ENCODE measurements at regions of chr4 and their contacts with region 1.

Region 1: DNA sequence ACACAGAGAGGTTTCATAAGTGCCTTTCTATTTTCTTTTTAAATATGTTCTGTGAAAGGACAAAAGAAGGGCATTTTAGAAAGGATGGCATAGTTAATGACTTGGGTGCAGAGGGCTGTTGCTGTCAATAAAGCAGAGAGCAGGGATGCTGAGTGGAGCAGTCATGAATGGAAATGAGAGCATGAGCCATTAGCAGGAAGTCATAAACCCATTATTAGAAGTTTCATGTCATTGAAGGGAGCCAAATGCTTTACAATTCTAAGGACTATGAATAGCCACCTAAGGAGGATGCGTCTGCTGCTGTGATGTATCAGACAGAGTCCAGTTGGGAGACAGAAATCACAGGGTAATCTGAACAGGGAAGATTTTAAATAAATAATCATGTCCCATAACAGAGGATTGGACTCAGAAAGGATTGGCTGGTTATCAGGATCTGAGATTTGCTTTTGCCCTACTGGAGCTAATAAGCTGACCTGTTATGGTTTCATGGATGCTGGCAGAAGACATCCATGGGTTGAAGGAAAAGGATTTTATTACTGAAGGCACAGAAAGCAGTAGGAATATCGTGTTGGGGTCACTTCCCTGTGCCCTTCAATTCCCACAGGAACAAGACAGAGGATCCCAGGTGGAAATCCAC is 47.5 kb upstream of the WDR19 start:
- DNase-seq: no peak
- ATAC-seq: no peak
- H3K4me3 Mint-ChIP-seq: no peak overlapping the region
- H3K27ac Mint-ChIP-seq: no peak overlapping the region
- H3K4me1 Mint-ChIP-seq: peaks cover 10% of the 10 kb centered on the region
- H3K27me3 Mint-ChIP-seq: no peaks in the 10 kb centered on the region

Region 2: DNA sequence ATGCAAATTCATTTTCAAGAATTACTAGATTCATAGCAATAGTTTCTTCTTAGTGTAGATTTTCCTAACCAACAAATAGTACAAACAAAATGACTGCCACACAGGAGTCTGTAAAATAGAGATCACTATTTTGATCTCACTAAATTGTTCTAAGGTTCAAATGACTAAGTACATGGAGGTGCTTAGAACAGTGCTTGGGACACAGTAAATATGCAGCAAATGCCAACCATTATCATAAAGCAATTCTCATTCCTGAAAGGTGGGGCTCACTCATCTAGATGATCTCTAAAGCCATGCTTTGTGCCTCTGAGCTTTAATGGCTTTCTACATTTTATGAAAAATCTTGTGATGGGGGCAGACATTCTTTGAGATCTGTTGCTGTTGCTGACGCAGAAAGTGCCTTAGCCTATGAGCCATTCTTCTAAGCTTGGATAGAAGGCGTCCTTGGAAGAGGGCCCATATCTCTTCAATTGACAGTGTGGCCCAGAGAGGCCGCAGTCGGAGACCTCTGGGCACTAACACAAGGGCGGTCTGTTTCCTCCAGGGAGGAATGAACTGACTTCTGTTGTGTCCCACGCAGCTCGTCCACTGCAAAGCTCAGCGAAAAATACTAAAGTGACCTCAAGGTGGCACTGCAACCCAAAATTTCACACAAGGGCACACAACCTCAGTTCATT is 375.6 kb before region 1 on chr4:
- CTCF ChIA-PET with region 1: interaction called, 15 read pairs
- DNase-seq: peak; percentile 71
- ATAC-seq: peak; percentile 69
- H3K4me3 Mint-ChIP-seq: no peak overlapping the region
- H3K27ac Mint-ChIP-seq: no peak overlapping the region
- H3K4me1 Mint-ChIP-seq: peaks cover 5% of the 10 kb centered on the region
- H3K27me3 Mint-ChIP-seq: peaks cover 11% of the 10 kb centered on the region

Region 3: GRCh38 chr4:38811297-38811696 is 323.5 kb before region 1 on chr4:
- CTCF ChIA-PET with region 1: no interaction called
- DNase-seq: no peak
- ATAC-seq: no peak
- H3K4me3 Mint-ChIP-seq: no peak overlapping the region
- H3K27ac Mint-ChIP-seq: no peak overlapping the region
- H3K4me1 Mint-ChIP-seq: no peaks in the 10 kb centered on the region
- H3K27me3 Mint-ChIP-seq: peaks cover 3% of the 10 kb centered on the region

Region 4: GRCh38 chr4:38894340-38894982 is 240.3 kb before region 1 on chr4:
- CTCF ChIA-PET with region 1: interaction called, 18 read pairs
- DNase-seq: no peak
- ATAC-seq: no peak
- H3K4me3 Mint-ChIP-seq: no peak overlapping the region
- H3K27ac Mint-ChIP-seq: no peak overlapping the region
- H3K4me1 Mint-ChIP-seq: peaks cover 3% of the 10 kb centered on the region
- H3K27me3 Mint-ChIP-seq: peaks cover 12% of the 10 kb centered on the region

Region 5: GRCh38 chr4:38914854-38915253 is 219.9 kb before region 1 on chr4:
- CTCF ChIA-PET with region 1: interaction called, 12 read pairs
- DNase-seq: no peak
- ATAC-seq: peak; percentile 57
- H3K4me3 Mint-ChIP-seq: peak overlapping the region; percentile 22
- H3K27ac Mint-ChIP-seq: peak overlapping the region; percentile 41
- H3K4me1 Mint-ChIP-seq: peaks cover 6% of the 10 kb centered on the region
- H3K27me3 Mint-ChIP-seq: no peaks in the 10 kb centered on the region

Region 6: GRCh38 chr4:39051454-39051853 is 83.3 kb before region 1 on chr4:
- CTCF ChIA-PET with region 1: interaction called, 13 read pairs
- DNase-seq: no peak
- ATAC-seq: no peak
- H3K4me3 Mint-ChIP-seq: no peak overlapping the region
- H3K27ac Mint-ChIP-seq: no peak overlapping the region
- H3K4me1 Mint-ChIP-seq: peaks cover 28% of the 10 kb centered on the region
- H3K27me3 Mint-ChIP-seq: no peaks in the 10 kb centered on the region

Region 7: DNA sequence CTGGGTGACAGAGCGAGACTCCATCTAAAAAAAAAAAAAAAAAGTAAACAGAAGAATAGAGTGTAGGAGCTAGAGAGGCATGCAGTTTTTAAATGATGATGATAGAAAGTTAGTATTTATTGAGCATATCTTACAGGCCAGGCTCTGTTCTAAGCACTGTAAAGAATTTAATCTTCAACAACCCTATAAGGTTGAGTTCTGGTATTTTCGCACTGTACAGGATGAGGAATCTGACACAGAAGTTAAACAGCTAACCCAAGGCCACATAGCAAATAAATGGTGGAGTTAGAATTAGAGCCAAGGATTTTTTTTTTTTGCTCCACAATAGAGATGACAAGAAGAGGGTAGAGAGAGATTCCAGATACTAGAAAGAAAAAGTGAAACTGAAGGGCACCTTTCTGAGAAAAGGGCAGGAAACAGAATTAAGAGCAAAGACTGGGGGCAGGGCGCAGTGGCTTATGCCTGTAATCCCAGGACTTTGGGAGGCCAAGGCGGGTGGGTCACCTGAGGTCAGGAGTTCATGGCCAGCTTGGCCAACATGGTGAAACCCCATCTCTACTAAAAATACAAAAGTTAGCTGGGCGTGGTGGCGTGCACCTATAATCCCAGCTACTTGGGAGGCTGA is 16.7 kb before region 1 on chr4:
- CTCF ChIA-PET with region 1: interaction called, 24 read pairs
- DNase-seq: peak; percentile 66
- ATAC-seq: peak; percentile 92
- H3K4me3 Mint-ChIP-seq: no peak overlapping the region
- H3K27ac Mint-ChIP-seq: peak overlapping the region; percentile 90
- H3K4me1 Mint-ChIP-seq: peaks cover 22% of the 10 kb centered on the region
- H3K27me3 Mint-ChIP-seq: no peaks in the 10 kb centered on the region

Region 8: DNA sequence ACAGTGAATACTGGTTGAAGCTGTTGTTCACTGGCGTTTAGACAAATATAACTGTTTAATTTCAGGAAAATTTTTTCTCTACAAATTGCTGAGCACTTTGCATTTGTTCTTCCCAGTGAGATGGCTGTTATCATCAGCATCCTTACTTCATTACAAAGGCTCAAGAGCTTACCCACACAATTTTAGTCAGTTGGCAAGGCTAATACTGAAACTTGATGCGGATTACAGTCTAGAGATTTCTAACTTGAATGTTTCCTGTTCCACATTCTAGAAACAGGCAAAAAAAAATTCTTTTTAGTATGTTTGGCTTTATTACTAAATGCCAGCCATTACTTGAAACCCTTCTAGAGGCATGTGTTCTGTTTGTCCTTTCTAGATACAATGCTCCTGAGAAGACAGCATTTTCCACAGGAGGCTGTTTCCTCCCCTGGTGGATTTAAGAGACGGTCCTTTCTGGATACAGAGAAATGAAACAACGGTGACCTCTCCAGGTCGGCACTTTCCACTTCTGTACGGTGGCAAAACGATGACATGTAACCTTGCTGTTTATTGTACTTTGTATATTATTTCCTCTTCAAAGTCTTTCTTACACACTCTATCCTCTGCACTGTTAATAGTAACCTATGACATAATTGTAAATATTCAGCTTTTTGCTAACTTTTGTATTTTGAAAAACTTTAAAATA is 150.5 kb after region 1 on chr4:
- CTCF ChIA-PET with region 1: no interaction called
- DNase-seq: peak; percentile 26
- ATAC-seq: peak; percentile 58
- H3K4me3 Mint-ChIP-seq: no peak overlapping the region
- H3K27ac Mint-ChIP-seq: peak overlapping the region; percentile 37
- H3K4me1 Mint-ChIP-seq: peaks cover 24% of the 10 kb centered on the region
- H3K27me3 Mint-ChIP-seq: no peaks in the 10 kb centered on the region

Region 9: GRCh38 chr4:39814403-39815185 is 679.8 kb after region 1 on chr4:
- CTCF ChIA-PET with region 1: no interaction called
- DNase-seq: peak; percentile 48
- ATAC-seq: peak; percentile 38
- H3K4me3 Mint-ChIP-seq: peak overlapping the region; percentile 51
- H3K27ac Mint-ChIP-seq: peak overlapping the region; percentile 79
- H3K4me1 Mint-ChIP-seq: no peaks in the 10 kb centered on the region
- H3K27me3 Mint-ChIP-seq: no peaks in the 10 kb centered on the region